Activated CD8-positive, alpha-beta T cell treated with anti-CD3 and anti-CD28 coated beads for 36 hours (primary cell): ENCODE measurements at regions of chr2 and their contacts with region 1.

Region 1: GRCh38 chr2:58046585-58047372 is at the start of gene VRK2:
- DNase-seq: peak; percentile 89
- ATAC-seq: peak; percentile 89
- H3K4me3 Mint-ChIP-seq: peak within 1 kb of the TSS; percentile 87
- H3K27ac Mint-ChIP-seq: peak within 1 kb of the TSS; percentile 96
- H3K4me1 Mint-ChIP-seq: peaks cover 41% of the 10 kb centered on the region
- H3K27me3 Mint-ChIP-seq: no peaks in the 10 kb centered on the region
- CTCF ChIP-seq: no peak
- total RNA-seq, gene VRK2: 17.7 to 18.3 TPM

Region 2: DNA sequence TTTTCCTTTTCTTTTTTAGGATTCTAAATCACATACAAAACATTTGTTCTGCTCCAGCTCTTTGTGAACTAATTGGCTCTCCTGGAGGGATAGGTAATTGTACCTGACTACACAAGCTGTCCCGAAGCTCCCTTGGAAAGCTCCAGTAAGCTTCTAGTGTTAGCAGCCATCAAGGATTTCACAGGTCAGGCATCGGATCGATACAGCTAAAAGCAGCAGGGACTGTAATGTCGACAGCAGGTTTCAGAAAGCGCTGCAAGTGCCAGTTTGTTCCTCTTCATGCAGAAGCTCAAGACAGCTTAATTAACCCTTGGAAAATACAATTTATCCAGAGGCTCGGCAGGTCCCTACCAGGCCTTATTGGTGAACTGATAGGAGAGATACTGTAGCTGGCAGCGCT is 87.4 kb before region 1 on chr2:
- CTCF ChIA-PET with region 1: no interaction called
- POLR2A ChIA-PET with region 1: no interaction called
- intact Hi-C with region 1: no loop called
- DNase-seq: no peak
- ATAC-seq: no peak
- H3K4me3 Mint-ChIP-seq: no peak overlapping the region
- H3K27ac Mint-ChIP-seq: no peak overlapping the region
- H3K4me1 Mint-ChIP-seq: no peaks in the 10 kb centered on the region
- H3K27me3 Mint-ChIP-seq: no peaks in the 10 kb centered on the region
- CTCF ChIP-seq: no peak

Region 3: DNA sequence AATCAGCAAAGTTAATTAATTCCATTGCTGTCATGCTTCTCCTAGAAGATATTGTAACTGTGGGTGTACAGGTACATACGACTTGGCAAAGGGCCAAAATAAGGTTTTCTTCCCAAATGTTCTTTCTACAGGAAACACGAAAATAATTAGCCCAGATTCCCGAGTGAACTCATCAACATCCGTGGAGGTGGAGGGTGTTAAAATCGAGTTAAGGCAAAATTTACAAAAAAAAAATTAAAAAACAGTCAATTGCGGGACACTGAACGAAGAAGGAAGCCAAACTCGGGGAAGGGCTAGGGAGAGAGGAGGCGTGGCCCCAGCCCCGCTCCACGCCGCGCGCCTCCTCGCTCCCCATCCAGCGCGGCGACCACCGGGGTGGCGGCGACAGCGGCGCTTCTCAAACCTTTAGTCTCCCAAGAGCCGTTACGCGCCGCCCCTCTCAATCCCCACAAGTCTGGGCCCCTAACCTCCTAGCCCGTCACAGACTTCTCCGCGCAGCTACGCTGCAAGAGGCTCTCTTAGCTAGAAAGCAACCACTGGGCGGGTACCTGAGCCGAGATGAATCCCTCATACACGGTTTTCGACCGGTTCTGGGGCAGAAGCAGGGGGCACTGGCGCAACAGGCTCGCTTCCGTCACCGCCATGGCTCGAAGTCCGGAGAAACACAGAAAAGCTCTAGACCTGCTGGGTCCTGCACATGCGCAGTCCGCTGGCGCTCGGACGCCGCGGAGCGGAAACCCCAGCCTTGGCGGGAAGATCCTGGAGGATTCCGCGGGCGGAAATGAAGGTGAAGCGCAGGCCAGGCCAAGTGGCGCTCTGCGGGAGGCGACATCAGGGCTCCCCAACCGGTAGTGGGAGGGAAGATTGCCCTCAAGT is 194.1 kb after region 1 on chr2 and contains the start of gene FANCL:
- CTCF ChIA-PET with region 1: no interaction called
- POLR2A ChIA-PET with region 1: no interaction called
- intact Hi-C with region 1: loop called (anchors 10 kb)
- DNase-seq: peak; percentile 76
- ATAC-seq: peak; percentile 87
- H3K4me3 Mint-ChIP-seq: peak within 1 kb of the TSS; percentile 92
- H3K27ac Mint-ChIP-seq: peak within 1 kb of the TSS; percentile 90
- H3K4me1 Mint-ChIP-seq: peaks cover 36% of the 10 kb centered on the region
- H3K27me3 Mint-ChIP-seq: peaks cover 8% of the 10 kb centered on the region
- CTCF ChIP-seq: no peak
- total RNA-seq, gene FANCL: 19.8 to 20.9 TPM